ENCODE measurements at regions of chr12 and their contacts with region 1.

Region 1: GRCh38 chr12:751192-751998 is 984 bp upstream of the WNK1 start:
- DNase-seq: no peak
- H3K4me3 ChIP-seq: peak overlapping the region; percentile 60
- CTCF ChIP-seq: peak; percentile 88

Region 2: DNA sequence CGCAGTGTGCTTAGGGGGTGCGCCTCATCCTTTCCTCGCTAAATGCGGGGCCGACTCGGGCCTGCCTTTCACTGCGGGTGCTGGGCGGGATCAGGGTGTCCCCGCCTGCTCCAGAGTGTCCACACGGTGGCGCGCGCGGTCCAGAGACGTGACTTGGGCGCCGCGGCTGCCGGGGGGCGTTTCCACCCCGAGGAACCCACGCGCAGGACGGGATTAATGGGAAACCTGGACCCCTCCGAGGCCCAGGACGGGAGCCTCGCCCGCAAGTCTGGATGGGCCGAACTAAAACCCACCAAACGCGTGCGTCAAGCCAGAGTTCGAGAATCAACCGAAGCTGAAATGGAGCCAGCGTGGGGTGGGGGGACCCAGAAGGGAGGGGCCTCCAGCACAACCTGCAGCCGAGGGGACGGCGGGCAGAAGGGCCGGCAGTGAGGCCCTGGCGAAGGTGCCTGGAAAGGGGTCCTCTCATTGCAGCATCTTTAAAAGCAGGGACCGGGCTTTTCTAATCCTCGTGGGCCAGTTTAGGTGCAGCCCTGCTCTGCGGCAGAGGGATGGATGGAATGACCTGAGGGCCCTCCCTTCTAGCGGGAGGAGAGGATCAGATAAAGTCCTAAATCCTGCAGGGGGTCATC is 181.5 kb before region 1 on chr12:
- CTCF ChIA-PET with region 1: interaction called, 202 read pairs
- POLR2A ChIA-PET with region 1: interaction called, 11 read pairs
- DNase-seq: no peak
- H3K4me3 ChIP-seq: peak overlapping the region; percentile 63
- CTCF ChIP-seq: peak; percentile 99

Region 3: GRCh38 chr12:614411-614970 is 136.9 kb before region 1 on chr12:
- CTCF ChIA-PET with region 1: interaction called, 30 read pairs
- POLR2A ChIA-PET with region 1: no interaction called
- DNase-seq: no peak
- H3K4me3 ChIP-seq: no peak overlapping the region
- CTCF ChIP-seq: peak; percentile 40

Region 4: DNA sequence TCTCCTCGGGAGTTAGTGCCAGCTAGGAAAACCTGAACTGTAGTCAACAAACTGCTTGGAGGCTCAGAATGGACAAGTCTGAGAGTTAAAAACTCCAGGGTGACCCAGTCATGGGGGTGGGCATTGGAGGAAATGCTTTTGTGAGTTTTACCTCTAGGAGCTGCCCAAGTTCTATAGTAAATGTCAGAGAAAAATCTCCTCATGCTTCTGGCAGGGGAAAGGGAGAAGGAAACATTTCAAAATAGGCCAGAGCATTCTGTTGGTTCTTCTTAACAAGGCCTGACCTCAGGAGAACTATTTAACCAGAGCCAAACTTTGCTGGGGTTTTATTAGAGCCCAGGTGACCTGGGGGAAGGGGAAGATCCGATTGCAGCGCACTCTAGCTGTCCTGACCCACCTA is 100.4 kb before region 1 on chr12:
- CTCF ChIA-PET with region 1: interaction called, 13 read pairs
- POLR2A ChIA-PET with region 1: no interaction called
- DNase-seq: no peak
- H3K4me3 ChIP-seq: no peak overlapping the region
- CTCF ChIP-seq: no peak

Region 5: GRCh38 chr12:774051-774614 is 22.7 kb after region 1 on chr12:
- CTCF ChIA-PET with region 1: interaction called, 33 read pairs
- POLR2A ChIA-PET with region 1: no interaction called
- DNase-seq: no peak
- H3K4me3 ChIP-seq: no peak overlapping the region
- CTCF ChIP-seq: no peak

Region 6: DNA sequence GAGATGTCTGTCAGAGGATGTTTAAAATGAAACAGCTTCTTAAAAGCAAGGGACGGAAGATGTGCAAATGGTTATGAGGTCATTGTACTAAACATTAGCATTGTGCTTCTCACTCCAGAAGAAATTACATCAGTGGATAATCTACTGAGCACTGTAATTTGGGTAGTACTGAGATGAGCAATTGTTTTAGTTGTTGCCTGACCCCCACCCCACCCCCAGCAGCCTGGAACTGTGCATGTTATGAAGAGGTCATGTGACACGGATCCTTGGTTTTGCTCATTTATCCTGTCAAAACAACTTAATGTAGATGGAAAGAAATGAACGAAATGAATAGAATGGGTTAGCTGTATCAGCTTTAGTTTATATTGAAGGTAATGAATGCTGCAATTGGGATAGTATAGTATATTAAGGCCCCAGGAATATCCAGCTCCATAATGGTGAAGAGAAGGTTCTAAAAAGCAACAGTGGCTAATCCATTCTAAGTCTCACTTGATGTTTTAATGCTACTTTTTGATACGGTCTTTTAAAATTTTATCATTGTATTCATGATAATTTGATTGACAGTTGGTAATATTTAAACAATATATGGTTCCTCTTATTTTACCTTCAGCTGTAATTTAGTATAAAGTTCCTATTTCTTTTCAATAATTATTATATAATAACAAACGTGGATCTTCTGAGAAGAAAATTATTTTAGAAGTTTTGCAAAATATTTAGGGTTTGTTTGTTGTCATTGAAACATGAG is 59.4 kb after region 1 on chr12:
- CTCF ChIA-PET with region 1: interaction called, 82 read pairs
- POLR2A ChIA-PET with region 1: interaction called, 5 read pairs
- DNase-seq: no peak
- H3K4me3 ChIP-seq: no peak overlapping the region
- CTCF ChIP-seq: no peak

Measured in AG04449 (cell line).